ENCODE measurements at regions of chr9 and their contacts with region 1.

Region 1: GRCh38 chr9:134449221-134449894 is 123.1 kb downstream of the RXRA start:
- DNase-seq: peak; percentile 80 to 87
- H3K4me3 ChIP-seq: no peak overlapping the region
- H3K27ac ChIP-seq: no peak overlapping the region
- H3K4me1 ChIP-seq: peaks cover 0 to 3% (median 1%) of the 10 kb centered on the region in 4 experiments; a peak in 2 of 7 replicates
- H3K27me3 ChIP-seq: no peaks in the 10 kb centered on the region
- CTCF ChIP-seq: peak in 2 of 3 experiments; percentile 92 to 94; a peak in 3 of 4 replicates
- EP300 ChIP-seq: no peak
- POLR2A ChIP-seq: no peak
- RAD21 ChIP-seq: peak; percentile 97 to 99

Region 2: GRCh38 chr9:134391314-134392231 is 57.8 kb before region 1 on chr9:
- CTCF ChIA-PET with region 1: no interaction called
- POLR2A ChIA-PET with region 1: no interaction called
- DNase-seq: no peak
- H3K4me3 ChIP-seq: no peak overlapping the region
- H3K27ac ChIP-seq: no peak overlapping the region; the same call in 1 of the 2 replicates
- H3K4me1 ChIP-seq: peaks cover 0 to 4% (median 1%) of the 10 kb centered on the region in 4 experiments; a peak in 2 of 7 replicates
- H3K27me3 ChIP-seq: no peaks in the 10 kb centered on the region
- CTCF ChIP-seq: no peak
- EP300 ChIP-seq: no peak
- POLR2A ChIP-seq: no peak
- RAD21 ChIP-seq: no peak

Region 3: DNA sequence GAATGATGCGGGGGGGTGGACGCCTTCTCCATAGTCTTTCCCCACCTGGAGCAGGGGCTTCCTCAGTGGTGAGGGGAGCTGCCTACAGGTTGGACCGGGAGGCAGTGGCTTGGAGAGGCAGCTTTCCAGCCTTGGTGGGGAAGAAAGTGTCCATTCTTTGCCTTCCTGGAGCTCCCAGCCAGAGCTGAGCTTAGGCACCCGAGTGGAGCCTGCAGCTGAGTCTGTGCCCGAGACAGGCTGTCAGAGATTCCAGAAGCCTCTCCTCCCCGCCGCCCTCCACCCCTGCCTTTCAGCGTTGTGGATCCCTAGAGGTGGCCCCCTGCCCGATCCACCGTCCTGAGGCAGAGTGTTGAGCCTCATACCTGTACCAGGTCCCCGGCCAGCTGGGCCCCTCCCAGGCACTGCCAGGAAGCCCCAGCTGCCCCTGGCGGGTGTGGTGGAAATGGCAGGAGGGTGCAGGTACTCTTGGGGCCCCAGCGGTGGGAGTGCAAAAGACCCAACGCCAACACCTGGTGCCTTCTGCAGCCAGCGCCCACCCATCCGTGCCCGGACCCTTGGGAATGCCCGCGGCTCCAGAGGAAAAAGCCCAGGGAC is 11.1 kb before region 1 on chr9:
- CTCF ChIA-PET with region 1: interaction called, 13 read pairs
- POLR2A ChIA-PET with region 1: no interaction called
- DNase-seq: peak in 1 of 2 experiments; percentile 74
- H3K4me3 ChIP-seq: no peak overlapping the region
- H3K27ac ChIP-seq: no peak overlapping the region
- H3K4me1 ChIP-seq: peaks cover 0 to 9% (median 4%) of the 10 kb centered on the region in 4 experiments; a peak in 4 of 7 replicates
- H3K27me3 ChIP-seq: no peaks in the 10 kb centered on the region
- CTCF ChIP-seq: peak in 2 of 3 experiments; percentile 43 to 54; a peak in 3 of 4 replicates
- EP300 ChIP-seq: no peak
- POLR2A ChIP-seq: no peak
- RAD21 ChIP-seq: peak; percentile 34 to 51; a peak in 3 of 4 replicates

Region 4: GRCh38 chr9:134559013-134559412 is 109.7 kb after region 1 on chr9:
- CTCF ChIA-PET with region 1: interaction called, 13 read pairs
- POLR2A ChIA-PET with region 1: no interaction called
- DNase-seq: no peak
- H3K4me3 ChIP-seq: no peak overlapping the region
- H3K27ac ChIP-seq: no peak overlapping the region
- H3K4me1 ChIP-seq: no peaks in the 10 kb centered on the region; a peak in 2 of 7 replicates
- H3K27me3 ChIP-seq: no peaks in the 10 kb centered on the region; a peak in 1 of 7 replicates
- CTCF ChIP-seq: no peak
- EP300 ChIP-seq: no peak
- POLR2A ChIP-seq: no peak
- RAD21 ChIP-seq: no peak

Region 5: DNA sequence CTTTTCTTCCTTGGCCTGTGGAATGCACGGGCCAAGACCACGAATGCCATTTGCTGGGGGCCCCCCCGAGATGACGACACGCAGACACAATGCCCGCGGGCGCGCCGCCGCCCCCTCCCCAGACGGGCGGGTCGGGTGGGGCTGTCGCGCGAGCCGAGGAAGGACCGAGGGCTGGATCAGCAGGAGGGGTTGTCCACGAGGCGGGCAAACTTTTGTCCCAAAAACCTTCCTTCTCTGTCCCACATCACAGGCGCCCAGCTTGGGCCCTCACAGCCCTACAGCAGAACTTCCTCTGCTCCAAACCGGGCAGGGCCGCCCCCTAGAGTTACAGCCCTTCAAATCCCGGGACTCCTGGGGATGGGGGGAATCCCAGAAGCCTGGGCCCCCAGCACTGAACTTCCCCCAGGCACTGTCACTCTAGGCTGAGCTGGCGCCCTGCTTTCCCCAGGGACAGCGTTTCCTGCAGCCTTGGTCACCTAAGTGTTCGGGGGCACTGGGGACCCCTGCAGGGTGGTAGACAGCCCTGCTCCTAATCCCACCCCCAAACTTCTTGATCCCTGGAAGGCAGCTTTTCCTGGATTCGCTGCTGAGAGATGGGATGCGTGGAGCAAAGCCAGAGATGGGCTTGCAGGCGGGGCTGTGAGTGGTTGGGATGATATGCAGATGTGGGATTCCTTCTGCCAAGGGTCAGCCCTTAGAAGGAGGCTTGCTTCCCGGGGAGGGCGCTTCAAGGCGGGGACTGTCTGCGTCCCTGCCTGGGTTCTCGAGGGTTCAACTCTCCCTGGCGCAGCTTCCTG is 193.2 kb after region 1 on chr9:
- CTCF ChIA-PET with region 1: interaction called, 12 read pairs
- POLR2A ChIA-PET with region 1: no interaction called
- DNase-seq: peak in 1 of 2 experiments; percentile 66
- H3K4me3 ChIP-seq: peak overlapping the region; percentile 56 to 82 (median 62)
- H3K27ac ChIP-seq: no peak overlapping the region
- H3K4me1 ChIP-seq: peaks cover 0 to 42% (median 16%) of the 10 kb centered on the region in 4 experiments; a peak in 6 of 7 replicates
- H3K27me3 ChIP-seq: peaks cover 0 to 10% (median 7%) of the 10 kb centered on the region in 4 experiments; a peak in 5 of 7 replicates
- CTCF ChIP-seq: no peak
- EP300 ChIP-seq: no peak
- POLR2A ChIP-seq: no peak
- RAD21 ChIP-seq: peak in 1 of 2 experiments; percentile 22; a peak in 1 of 4 replicates

Region 6: GRCh38 chr9:134738869-134739659 is 289.7 kb after region 1 on chr9:
- CTCF ChIA-PET with region 1: interaction called, 14 read pairs
- POLR2A ChIA-PET with region 1: no interaction called
- DNase-seq: peak; percentile 21 to 93
- H3K4me3 ChIP-seq: no peak overlapping the region
- H3K27ac ChIP-seq: no peak overlapping the region
- H3K4me1 ChIP-seq: peaks cover 0 to 7% (median 1%) of the 10 kb centered on the region in 4 experiments; a peak in 3 of 7 replicates
- H3K27me3 ChIP-seq: no peaks in the 10 kb centered on the region
- CTCF ChIP-seq: peak in 2 of 3 experiments; percentile 77 to 89; a peak in 3 of 4 replicates
- EP300 ChIP-seq: no peak
- POLR2A ChIP-seq: no peak
- RAD21 ChIP-seq: peak; percentile 78 to 83